ENCODE measurements at regions of chr3 and their contacts with region 1.

Region 1: GRCh38 chr3:59857589-59858346 is 807.9 kb upstream of the CFAP20DC start:
- DNase-seq: peak; percentile 73
- H3K4me3 Mint-ChIP-seq: peak overlapping the region; percentile 27
- H3K27ac Mint-ChIP-seq: peak overlapping the region; percentile 54
- H3K4me1 Mint-ChIP-seq: no peaks in the 10 kb centered on the region
- H3K27me3 Mint-ChIP-seq: no peaks in the 10 kb centered on the region
- CTCF ChIP-seq: peak; percentile 77

Region 2: GRCh38 chr3:59388555-59389270 is 469.1 kb before region 1 on chr3:
- CTCF ChIA-PET with region 1: no interaction called
- intact Hi-C with region 1: no loop called
- DNase-seq: no peak
- H3K4me3 Mint-ChIP-seq: no peak overlapping the region
- H3K27ac Mint-ChIP-seq: no peak overlapping the region
- H3K4me1 Mint-ChIP-seq: no peaks in the 10 kb centered on the region
- H3K27me3 Mint-ChIP-seq: no peaks in the 10 kb centered on the region
- CTCF ChIP-seq: no peak

Region 3: DNA sequence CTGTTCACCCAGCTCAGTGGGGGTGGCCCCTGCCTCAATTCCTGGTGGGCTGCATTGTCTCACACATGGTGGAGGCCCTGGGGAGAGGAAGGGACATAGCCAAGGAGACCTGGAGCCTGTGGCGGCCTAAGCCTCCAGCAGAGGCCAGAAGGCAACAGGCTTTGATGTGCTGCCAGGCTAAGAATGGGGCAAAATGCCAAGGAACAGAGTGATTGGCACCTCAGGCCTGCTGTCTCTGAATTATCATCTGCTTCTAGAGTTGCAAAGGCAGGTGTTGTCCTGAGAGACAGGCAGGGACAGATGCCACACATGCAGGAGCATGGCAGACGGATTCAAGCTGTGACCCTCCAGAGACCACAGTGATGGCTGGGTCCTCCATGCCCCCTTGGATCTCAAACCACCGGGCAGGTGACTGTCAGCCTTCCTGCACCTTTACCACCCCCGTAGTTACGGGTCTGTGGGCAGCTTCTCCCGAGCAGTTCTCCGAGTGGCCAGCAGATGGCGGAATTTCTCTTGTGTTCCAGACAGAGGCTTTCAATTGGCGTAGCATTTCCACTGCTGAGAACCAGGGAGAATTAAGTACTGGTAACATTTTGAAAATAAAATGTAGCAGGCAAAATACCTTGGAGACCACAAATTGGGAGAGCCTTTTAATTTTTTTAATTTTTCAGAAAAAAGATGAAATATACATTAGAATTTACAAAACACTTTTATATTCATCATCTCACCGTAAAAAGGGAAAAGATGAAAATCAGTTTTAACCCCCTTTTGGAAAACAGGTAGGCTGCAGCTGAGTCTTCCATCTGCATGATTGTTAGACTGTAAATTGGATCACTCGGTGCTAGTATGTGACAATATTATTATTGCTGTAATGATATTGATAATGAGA is 282.4 kb before region 1 on chr3:
- CTCF ChIA-PET with region 1: interaction called, 5 read pairs
- intact Hi-C with region 1: loop called (anchors 2 kb)
- DNase-seq: peak; percentile 80
- H3K4me3 Mint-ChIP-seq: no peak overlapping the region
- H3K27ac Mint-ChIP-seq: no peak overlapping the region
- H3K4me1 Mint-ChIP-seq: no peaks in the 10 kb centered on the region
- H3K27me3 Mint-ChIP-seq: peaks cover 8% of the 10 kb centered on the region
- CTCF ChIP-seq: peak; percentile 80